IMR-90 (cell line): ENCODE measurements at regions of chr4 and their contacts with region 1.

Region 1: DNA sequence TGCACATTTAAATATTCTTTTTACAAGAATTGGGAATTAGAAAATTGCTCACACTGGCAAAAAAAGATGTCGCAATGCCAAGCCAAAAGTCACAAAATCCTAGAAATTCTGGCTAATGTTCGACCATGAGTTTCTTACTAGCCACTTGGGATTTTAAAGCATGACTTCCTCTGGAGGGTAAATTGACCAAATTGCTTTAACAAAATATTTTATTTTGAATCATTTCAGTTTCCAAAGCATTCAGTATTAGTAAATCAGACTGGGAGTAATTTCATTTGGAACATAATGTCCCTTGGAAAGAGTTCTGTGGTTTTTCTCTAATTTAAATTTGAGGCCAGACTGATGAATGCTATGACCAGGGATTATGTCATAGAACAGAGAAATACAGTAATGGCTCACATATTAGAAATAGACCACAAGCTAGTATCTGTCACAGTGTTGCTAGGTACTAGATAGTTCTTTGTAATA is 7.6 kb upstream of the CXCL5 start:
- DNase-seq: peak; percentile 38
- ATAC-seq: no peak
- H3K4me3 ChIP-seq: no peak overlapping the region
- H3K27ac ChIP-seq: no peak overlapping the region
- H3K4me1 ChIP-seq: no peaks in the 10 kb centered on the region
- H3K27me3 ChIP-seq: no peaks in the 10 kb centered on the region
- CTCF ChIP-seq: no peak
- POLR2A ChIP-seq: no peak
- RAD21 ChIP-seq: no peak

Region 2: GRCh38 chr4:73984736-73985527 is 21.1 kb before region 1 on chr4:
- CTCF ChIA-PET with region 1: no interaction called
- POLR2A ChIA-PET with region 1: no interaction called
- dilution Hi-C with region 1: no loop called
- in situ Hi-C with region 1: no loop called
- intact Hi-C with region 1: no loop called
- DNase-seq: peak; percentile 70
- ATAC-seq: peak; percentile 54
- H3K4me3 ChIP-seq: no peak overlapping the region
- H3K27ac ChIP-seq: no peak overlapping the region
- H3K4me1 ChIP-seq: no peaks in the 10 kb centered on the region
- H3K27me3 ChIP-seq: peaks cover 7% of the 10 kb centered on the region
- CTCF ChIP-seq: no peak
- POLR2A ChIP-seq: no peak
- RAD21 ChIP-seq: no peak

Region 3: DNA sequence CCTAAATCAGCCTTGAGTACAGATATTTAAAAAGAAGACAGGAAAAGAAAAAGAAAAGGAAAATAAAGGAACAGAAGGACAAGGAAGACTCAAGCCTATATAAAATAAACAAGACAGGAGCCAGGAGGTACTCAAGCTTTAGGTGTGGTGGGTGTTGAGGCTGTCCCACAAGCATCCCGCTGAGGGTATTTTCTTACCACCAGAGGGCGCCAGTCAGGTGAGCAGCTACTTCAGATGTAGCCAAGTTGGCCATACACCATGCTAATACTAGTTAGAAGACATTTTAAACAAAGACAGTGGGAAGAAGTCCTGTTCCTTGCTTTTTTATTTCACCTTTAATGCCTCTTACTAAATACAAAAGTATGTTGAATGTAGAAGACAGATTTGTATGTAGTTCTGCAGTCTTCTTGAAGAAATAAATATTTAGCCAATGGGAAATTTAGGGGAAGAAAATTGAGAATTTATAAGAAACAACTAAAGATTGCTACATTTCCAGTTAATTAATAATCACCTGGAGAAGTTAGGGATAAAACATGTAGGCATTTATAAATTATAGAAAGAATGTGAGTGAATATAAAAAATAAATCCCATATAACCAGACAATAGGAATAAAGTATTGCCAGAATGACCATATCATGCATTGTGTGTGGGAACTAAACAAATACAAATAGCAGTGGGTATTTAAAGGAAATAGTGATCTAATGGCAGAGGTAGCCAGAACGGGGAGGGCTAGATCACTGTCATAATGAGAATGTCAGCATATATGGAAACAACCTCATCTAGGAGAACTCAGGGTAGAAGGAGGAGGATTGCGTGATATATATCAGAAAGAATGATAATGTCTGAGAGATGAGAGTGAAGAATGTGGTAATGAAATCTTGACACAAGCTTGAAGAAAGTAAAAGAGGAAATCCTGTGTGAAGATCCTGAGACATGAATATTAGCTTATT is 222.9 kb after region 1 on chr4:
- CTCF ChIA-PET with region 1: no interaction called
- POLR2A ChIA-PET with region 1: no interaction called
- dilution Hi-C with region 1: no loop called
- in situ Hi-C with region 1: no loop called
- intact Hi-C with region 1: no loop called
- DNase-seq: peak; percentile 67
- ATAC-seq: peak; percentile 52; the same call in 1 of the 2 replicates
- H3K4me3 ChIP-seq: no peak overlapping the region
- H3K27ac ChIP-seq: no peak overlapping the region
- H3K4me1 ChIP-seq: peaks cover 6% of the 10 kb centered on the region; the same call in 1 of the 2 replicates
- H3K27me3 ChIP-seq: no peaks in the 10 kb centered on the region
- CTCF ChIP-seq: peak; percentile 65
- POLR2A ChIP-seq: no peak
- RAD21 ChIP-seq: peak; percentile 54

Region 4: GRCh38 chr4:75869100-75869499 is 1863.1 kb after region 1 on chr4:
- CTCF ChIA-PET with region 1: no interaction called
- POLR2A ChIA-PET with region 1: no interaction called
- dilution Hi-C with region 1: no loop called
- in situ Hi-C with region 1: no loop called
- intact Hi-C with region 1: loop called (anchors 10 kb)
- DNase-seq: no peak
- ATAC-seq: no peak
- H3K4me3 ChIP-seq: no peak overlapping the region
- H3K27ac ChIP-seq: no peak overlapping the region
- H3K4me1 ChIP-seq: no peaks in the 10 kb centered on the region
- H3K27me3 ChIP-seq: peaks cover 12% of the 10 kb centered on the region
- CTCF ChIP-seq: no peak
- POLR2A ChIP-seq: no peak
- RAD21 ChIP-seq: no peak